ENCODE measurements at regions of chr12 and their contacts with region 1.

Region 1: DNA sequence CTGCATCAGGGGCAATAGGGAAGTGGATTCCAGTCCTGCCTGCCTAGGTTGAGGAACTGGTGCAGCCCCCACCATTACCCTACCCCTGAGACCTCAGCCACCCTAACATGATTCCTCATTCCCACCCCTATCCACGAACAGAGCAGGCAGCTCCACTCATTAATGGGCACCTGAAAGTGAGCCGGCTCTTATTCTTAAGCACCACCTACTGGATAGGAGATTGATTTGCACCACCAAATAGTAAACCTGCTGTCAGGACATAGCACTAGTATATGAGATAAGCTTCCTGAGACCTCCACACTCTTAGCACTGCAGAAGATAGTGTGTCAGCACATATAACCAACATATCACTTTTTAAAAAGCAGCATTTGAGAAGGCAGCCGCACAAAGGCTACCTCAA is 573.2 kb downstream of the SOX5 start:
- DNase-seq: no peak
- H3K4me3 ChIP-seq: no peak overlapping the region
- H3K27ac ChIP-seq: no peak overlapping the region
- H3K4me1 ChIP-seq: no peaks in the 10 kb centered on the region
- H3K27me3 ChIP-seq: no peaks in the 10 kb centered on the region
- CTCF ChIP-seq: no peak
- POLR2A ChIP-seq: no peak

Region 2: GRCh38 chr12:24307716-24308335 is 931.6 kb after region 1 on chr12:
- intact Hi-C with region 1: loop called (anchors 10 kb)
- DNase-seq: no peak
- H3K4me3 ChIP-seq: no peak overlapping the region
- H3K27ac ChIP-seq: no peak overlapping the region
- H3K4me1 ChIP-seq: no peaks in the 10 kb centered on the region
- H3K27me3 ChIP-seq: no peaks in the 10 kb centered on the region
- CTCF ChIP-seq: no peak
- POLR2A ChIP-seq: no peak

Region 3: GRCh38 chr12:25052196-25052913 is 1676.1 kb after region 1 on chr12:
- intact Hi-C with region 1: loop called (anchors 10 kb)
- DNase-seq: no peak
- H3K4me3 ChIP-seq: peak overlapping the region; percentile 30 to 33 (median 30)
- H3K27ac ChIP-seq: no peak overlapping the region
- H3K4me1 ChIP-seq: no peaks in the 10 kb centered on the region
- H3K27me3 ChIP-seq: no peaks in the 10 kb centered on the region
- CTCF ChIP-seq: no peak
- POLR2A ChIP-seq: no peak

Measured in breast epithelium (tissue), 4 donors.